Mammary epithelial cell (primary cell): ENCODE measurements at regions of chr3 and their contacts with region 1.

Region 1: DNA sequence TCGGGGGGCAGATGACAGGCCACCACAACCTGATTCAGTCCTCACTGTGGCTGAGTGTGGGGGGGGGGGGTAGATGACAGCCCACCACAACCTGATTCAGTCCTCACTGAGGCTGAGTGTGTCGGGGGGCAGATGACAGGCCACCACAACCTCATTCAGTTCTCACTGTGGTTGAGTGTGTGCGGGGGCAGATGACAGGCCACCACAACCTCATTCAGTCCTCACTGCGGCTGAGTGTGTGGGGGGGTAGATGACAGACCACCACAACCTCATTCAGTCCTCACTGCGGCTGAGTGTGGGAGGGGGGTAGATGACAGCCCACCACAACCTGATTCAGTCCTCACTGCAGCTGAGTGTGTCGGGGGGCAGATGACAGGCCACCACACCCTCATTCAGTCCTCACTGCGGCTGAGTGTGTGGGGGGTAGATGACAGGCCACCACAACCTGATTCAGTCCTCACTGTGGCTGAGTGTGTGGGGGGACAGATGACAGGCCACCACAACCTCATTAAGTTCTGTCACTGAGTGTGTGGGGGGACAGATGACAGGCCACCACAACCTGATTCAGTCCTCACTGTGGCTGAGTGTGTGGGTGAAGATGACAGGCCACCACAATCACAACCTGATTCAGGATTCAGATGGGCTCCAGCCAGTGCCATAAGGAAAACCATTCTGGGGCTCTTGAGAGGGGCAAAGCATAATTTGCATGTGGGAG is 16.9 kb downstream of the ZNF717 start:
- DNase-seq: no peak
- H3K4me3 ChIP-seq: no peak overlapping the region
- H3K27ac ChIP-seq: no peak overlapping the region
- H3K4me1 ChIP-seq: no peaks in the 10 kb centered on the region
- H3K27me3 ChIP-seq: no peaks in the 10 kb centered on the region
- CTCF ChIP-seq: no peak

Region 2: GRCh38 chr3:76923485-76923884 is 1155.0 kb after region 1 on chr3:
- CTCF ChIA-PET with region 1: no interaction called
- dilution Hi-C with region 1: no loop called
- in situ Hi-C with region 1: no loop called
- intact Hi-C with region 1: loop called (anchors 10 kb)
- DNase-seq: no peak
- H3K4me3 ChIP-seq: no peak overlapping the region
- H3K27ac ChIP-seq: no peak overlapping the region
- H3K4me1 ChIP-seq: no peaks in the 10 kb centered on the region
- H3K27me3 ChIP-seq: no peaks in the 10 kb centered on the region
- CTCF ChIP-seq: no peak